Thyroid gland (tissue), 4 donors: ENCODE measurements at regions of chr6 and their contacts with region 1.

Region 1: GRCh38 chr6:16409531-16410441 is 171.4 kb downstream of the GMPR start:
- DNase-seq: peak; percentile 63 to 71
- H3K4me3 ChIP-seq: no peak overlapping the region
- H3K27ac ChIP-seq: no peak overlapping the region
- H3K4me1 ChIP-seq: peaks cover under 1% of the 10 kb centered on the region in 2 donors
- H3K27me3 ChIP-seq: no peaks in the 10 kb centered on the region
- CTCF ChIP-seq: peak; percentile 61 to 87 (median 72)
- POLR2A ChIP-seq: no peak

Region 2: GRCh38 chr6:16324606-16325225 is 85.1 kb before region 1 on chr6:
- intact Hi-C with region 1: loop called (anchors 5 kb)
- DNase-seq: no peak
- H3K4me3 ChIP-seq: no peak overlapping the region
- H3K27ac ChIP-seq: no peak overlapping the region
- H3K4me1 ChIP-seq: peaks cover 10 to 17% of the 10 kb centered on the region in 2 donors
- H3K27me3 ChIP-seq: no peaks in the 10 kb centered on the region
- CTCF ChIP-seq: no peak
- POLR2A ChIP-seq: no peak

Region 3: GRCh38 chr6:16338577-16339262 is 71.1 kb before region 1 on chr6:
- intact Hi-C with region 1: loop called (anchors 5 kb)
- DNase-seq: peak; percentile 66 to 68
- H3K4me3 ChIP-seq: no peak overlapping the region
- H3K27ac ChIP-seq: no peak overlapping the region
- H3K4me1 ChIP-seq: peaks cover 15 to 27% of the 10 kb centered on the region in 2 donors
- H3K27me3 ChIP-seq: no peaks in the 10 kb centered on the region
- CTCF ChIP-seq: peak in 5 of 6 experiments; percentile 9 to 46 (median 33)
- POLR2A ChIP-seq: no peak

Region 4: GRCh38 chr6:16562498-16562897 is 152.7 kb after region 1 on chr6:
- intact Hi-C with region 1: no loop called
- DNase-seq: no peak
- H3K4me3 ChIP-seq: no peak overlapping the region
- H3K27ac ChIP-seq: no peak overlapping the region
- H3K4me1 ChIP-seq: peaks cover 9 to 15% of the 10 kb centered on the region in 2 donors
- H3K27me3 ChIP-seq: no peaks in the 10 kb centered on the region
- CTCF ChIP-seq: no peak
- POLR2A ChIP-seq: no peak